Activated CD8-positive, alpha-beta T cell treated with anti-CD3 and anti-CD28 coated beads for 36 hours (primary cell): ENCODE measurements at regions of chr13 and their contacts with region 1.

Region 1: DNA sequence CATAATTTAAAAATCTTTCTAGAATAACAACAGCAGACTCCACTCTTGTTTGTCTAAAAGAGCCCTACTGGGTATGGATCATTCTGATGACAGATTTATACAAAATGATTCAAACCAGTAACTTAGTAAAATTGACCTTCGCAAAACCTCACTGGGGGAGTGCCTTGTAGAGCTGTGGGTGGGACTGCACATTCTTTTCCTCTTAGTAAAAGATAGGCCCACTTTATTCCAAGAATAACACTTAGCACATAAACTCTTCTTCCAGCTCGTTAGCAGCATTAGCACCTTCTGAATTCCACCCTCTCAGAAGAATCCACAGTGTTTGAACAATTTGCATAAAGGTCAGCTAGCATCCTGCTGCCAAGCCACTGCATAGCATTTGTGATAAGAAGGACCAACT is 106.8 kb downstream of the STOML3 start:
- DNase-seq: no peak
- ATAC-seq: no peak
- H3K4me3 Mint-ChIP-seq: no peak overlapping the region
- H3K27ac Mint-ChIP-seq: no peak overlapping the region
- H3K4me1 Mint-ChIP-seq: no peaks in the 10 kb centered on the region
- H3K27me3 Mint-ChIP-seq: peaks cover 9% of the 10 kb centered on the region
- CTCF ChIP-seq: no peak

Region 2: DNA sequence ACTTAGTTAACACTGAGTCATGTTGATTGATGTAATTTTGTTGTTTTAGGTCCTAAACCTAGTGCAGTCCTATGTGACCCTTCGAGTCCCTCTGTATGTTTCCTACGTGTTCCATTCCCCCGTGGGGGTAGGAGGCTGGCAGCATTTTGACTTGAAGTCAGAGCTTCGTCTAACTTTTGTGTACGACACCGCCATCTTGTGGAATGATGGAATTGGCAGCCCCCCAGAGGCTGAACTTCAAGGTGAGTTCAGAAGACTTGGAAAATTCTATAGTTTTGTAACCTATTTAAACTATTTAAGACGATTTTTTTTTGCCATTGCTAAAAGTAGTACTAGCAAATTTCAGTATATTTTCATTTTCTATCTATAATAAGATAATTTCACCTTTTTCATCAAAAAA is 11.1 kb before region 1 on chr13:
- CTCF ChIA-PET with region 1: interaction called, 13 read pairs
- POLR2A ChIA-PET with region 1: no interaction called
- intact Hi-C with region 1: no loop called
- DNase-seq: peak; percentile 67
- ATAC-seq: peak; percentile 51
- H3K4me3 Mint-ChIP-seq: no peak overlapping the region
- H3K27ac Mint-ChIP-seq: no peak overlapping the region
- H3K4me1 Mint-ChIP-seq: no peaks in the 10 kb centered on the region
- H3K27me3 Mint-ChIP-seq: peaks cover 15% of the 10 kb centered on the region
- CTCF ChIP-seq: peak; percentile 71

Region 3: DNA sequence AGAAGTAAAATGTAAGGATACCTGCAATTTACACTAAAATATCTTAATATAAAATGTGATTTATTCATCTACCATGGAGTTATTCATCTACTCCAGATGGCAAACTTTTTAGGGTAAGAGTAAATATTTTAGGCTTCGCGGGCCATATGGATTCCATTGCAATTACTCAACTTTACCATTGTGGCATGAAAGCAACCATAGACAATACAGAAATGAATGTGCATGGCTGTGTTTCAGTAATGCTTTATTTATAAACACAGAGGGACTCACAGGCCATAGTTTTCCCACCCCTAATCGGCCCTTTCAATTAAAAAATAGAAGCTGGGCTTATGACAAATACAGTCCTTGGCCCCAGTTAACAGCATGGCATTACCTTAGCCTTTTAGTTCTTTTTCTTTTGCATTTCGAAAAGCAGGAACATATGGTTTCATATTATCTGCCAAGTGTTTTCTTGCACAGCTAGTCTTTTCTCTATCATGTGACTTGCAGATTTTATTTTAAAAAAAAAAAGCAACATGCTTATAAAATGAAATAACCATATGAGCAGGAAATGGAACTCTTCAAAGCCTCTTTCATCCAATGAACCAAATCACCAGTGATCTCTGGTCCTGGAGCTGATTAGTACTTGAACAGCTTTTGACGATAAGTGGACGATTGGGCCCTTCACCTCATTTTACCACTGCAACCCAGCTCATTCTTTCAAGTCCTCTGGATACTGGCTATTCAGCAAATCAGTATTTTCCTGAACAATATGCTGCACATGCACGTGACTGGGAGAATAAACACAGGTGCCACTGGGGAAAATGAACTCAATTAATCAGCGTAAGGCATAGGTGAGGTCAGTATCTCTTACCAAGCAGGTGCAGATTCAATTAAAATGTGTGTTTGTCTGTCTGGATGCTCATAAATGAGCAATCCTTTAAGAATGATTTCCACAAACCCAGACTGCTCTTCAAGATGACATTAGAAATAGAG is 655.3 kb after region 1 on chr13:
- CTCF ChIA-PET with region 1: no interaction called
- POLR2A ChIA-PET with region 1: no interaction called
- intact Hi-C with region 1: no loop called
- DNase-seq: no peak
- ATAC-seq: no peak
- H3K4me3 Mint-ChIP-seq: no peak overlapping the region
- H3K27ac Mint-ChIP-seq: no peak overlapping the region
- H3K4me1 Mint-ChIP-seq: no peaks in the 10 kb centered on the region
- H3K27me3 Mint-ChIP-seq: peaks cover 18% of the 10 kb centered on the region
- CTCF ChIP-seq: no peak